Posterior cingulate gyrus (tissue), 11 donors: ENCODE measurements at regions of chr11 and their contacts with region 1.

Region 1: DNA sequence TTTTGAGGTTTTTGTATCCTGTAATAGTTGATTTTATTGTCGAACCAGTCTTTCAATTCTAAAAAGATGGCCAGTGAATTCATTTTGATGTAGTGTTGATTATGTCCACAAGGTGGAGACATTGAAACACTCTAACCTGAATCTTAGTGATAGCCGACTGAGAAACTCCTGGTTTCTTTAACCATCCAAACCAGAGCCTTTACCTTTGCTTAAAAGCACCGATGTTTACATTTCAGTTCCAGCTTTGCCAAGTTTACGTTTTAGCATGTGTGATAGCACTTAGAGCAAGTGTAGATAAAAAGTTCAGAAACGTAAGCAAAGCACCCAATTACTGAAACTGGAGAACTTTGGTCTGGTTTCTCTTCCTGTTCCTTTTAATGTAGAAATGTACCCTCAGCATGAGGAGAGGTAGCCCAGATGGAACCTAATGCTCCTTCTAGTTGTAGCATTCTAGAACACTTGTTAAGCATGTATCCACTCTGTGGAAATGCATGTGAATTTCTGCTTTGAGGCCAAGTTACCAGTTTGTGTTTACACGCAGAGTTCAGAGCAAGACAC is 208.6 kb downstream of the DBX1 start:
- DNase-seq: no peak

Region 2: GRCh38 chr11:20110908-20111669 is 159.5 kb after region 1 on chr11:
- intact Hi-C with region 1: loop called (anchors 5 kb)
- DNase-seq: peak in 2 of 10 donors; percentile 24 to 79

Region 3: GRCh38 chr11:20355221-20356219 is 403.9 kb after region 1 on chr11:
- intact Hi-C with region 1: loop called (anchors 10 kb)
- DNase-seq: peak in 6 of 10 donors; percentile 34 to 89 (median 42)